Ovary (tissue), 10 donors: ENCODE measurements at regions of chr1 and their contacts with region 1.

Region 1: GRCh38 chr1:180470031-180470430 is 32.3 kb downstream of the ACBD6 start:
- DNase-seq: no peak
- H3K4me3 ChIP-seq: no peak overlapping the region
- H3K27ac ChIP-seq: no peak overlapping the region
- H3K4me1 ChIP-seq: no peaks in the 10 kb centered on the region
- H3K27me3 ChIP-seq: no peaks in the 10 kb centered on the region
- CTCF ChIP-seq: no peak
- EP300 ChIP-seq: no peak
- POLR2A ChIP-seq: no peak

Region 2: GRCh38 chr1:180252638-180253536 is 217.1 kb before region 1 on chr1:
- intact Hi-C with region 1: loop called in 1 of 4 experiments (anchors 10 kb)
- DNase-seq: peak in 1 of 5 donors; percentile 53
- H3K4me3 ChIP-seq: no peak overlapping the region
- H3K27ac ChIP-seq: no peak overlapping the region
- H3K4me1 ChIP-seq: no peaks in the 10 kb centered on the region
- H3K27me3 ChIP-seq: no peaks in the 10 kb centered on the region
- CTCF ChIP-seq: no peak
- EP300 ChIP-seq: no peak
- POLR2A ChIP-seq: no peak